ENCODE measurements at regions of chr11 and their contacts with region 1.

Region 1: GRCh38 chr11:6682936-6683861 is at the start of gene MRPL17:
- DNase-seq: peak; percentile 100
- ATAC-seq: peak; percentile 97
- H3K4me3 Mint-ChIP-seq: peak within 1 kb of the TSS; percentile 97
- H3K27ac Mint-ChIP-seq: peak within 1 kb of the TSS; percentile 97
- H3K4me1 Mint-ChIP-seq: peaks cover 20% of the 10 kb centered on the region
- H3K27me3 Mint-ChIP-seq: no peaks in the 10 kb centered on the region
- total RNA-seq, gene MRPL17: 69.4 to 81.0 TPM

Region 2: DNA sequence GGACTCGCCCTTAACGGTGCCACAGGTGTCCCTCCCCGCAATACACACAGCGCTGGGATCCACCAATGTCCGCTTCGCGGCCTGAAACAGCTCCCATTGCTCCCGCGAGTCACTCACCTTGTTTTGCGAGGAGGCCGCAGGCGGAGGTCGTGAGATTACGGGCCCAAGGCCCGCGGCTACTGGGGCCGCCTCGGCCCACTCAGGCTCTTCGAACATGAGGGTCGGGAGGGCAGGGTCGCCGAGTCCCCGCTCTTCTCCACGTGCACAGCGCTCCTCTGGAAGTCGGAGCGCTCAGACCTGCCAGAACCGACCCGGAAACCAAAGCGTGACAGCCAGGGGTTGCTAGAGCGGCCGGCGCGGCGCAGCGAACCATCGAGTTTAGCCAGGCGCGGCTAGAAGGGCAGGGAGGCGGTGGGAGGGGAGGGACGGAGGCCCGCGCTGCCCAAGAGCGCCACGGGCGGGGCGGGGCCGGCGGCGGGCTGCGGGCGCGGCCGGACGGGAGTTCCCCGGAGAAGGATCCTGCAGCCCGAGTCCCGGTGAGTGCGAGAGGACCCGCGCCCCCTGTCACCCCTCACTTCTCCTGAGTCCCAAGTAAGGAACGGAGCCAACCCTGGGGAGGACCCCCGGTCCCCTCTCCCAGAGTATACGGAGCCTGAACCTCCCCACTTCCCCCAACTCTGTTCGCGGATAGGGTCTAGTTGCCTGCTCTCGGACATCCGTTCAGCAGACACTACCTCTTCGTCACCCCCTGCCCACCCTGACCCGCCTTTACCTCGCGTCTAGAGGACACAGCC is 79.7 kb before region 1 on chr11 and contains the starts of genes ILK and RRP8:
- CTCF ChIA-PET with region 1: interaction called, 41 read pairs
- DNase-seq: peak; percentile 94
- ATAC-seq: peak; percentile 78
- H3K4me3 Mint-ChIP-seq: no peak within 1 kb of the TSS
- H3K27ac Mint-ChIP-seq: no peak within 1 kb of the TSS
- H3K4me1 Mint-ChIP-seq: peaks cover 30% of the 10 kb centered on the region
- H3K27me3 Mint-ChIP-seq: no peaks in the 10 kb centered on the region
- total RNA-seq, gene ILK: 151 to 161 TPM
- total RNA-seq, gene RRP8: 25.6 to 33.1 TPM

Region 3: DNA sequence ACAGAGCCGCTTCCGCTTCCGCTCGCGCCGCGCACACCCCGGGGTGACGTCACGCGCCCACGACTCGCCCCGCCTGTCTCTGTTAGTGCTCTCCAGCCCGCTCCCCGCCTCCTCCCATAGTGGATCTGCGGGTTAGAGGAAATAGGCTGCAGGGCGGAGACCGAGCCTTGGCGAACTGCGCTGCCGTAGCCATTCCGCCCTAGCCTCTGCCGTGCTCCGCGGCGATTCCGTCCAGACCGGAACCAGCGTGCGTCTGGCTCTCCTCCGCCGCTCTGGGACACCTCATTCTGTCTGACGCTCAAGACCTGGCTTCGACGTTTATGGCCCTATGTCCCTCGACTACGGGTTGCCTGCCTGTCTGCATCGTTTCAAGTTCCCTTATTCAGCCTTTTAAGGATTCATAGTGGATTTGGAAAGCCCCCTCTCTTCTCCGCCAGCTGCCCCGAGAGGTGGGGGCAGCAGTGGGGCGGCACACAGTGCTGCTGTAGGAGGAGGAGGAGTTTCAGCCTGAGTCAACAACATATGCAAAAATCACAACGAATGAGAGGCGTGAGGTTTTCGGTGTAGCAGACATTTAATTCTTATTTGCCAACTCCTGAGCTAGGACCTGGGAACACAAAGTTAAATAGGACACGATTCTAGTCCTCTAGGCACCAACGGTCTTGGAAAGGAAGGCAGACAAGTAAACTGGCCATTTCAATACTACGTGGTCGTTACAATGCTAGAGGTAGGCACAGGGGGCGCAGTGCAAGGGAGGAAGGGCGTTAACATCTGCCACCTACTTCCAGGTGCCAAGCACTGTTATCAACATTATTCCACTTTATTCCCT is 70.8 kb before region 1 on chr11 and contains the start of gene TAF10:
- CTCF ChIA-PET with region 1: interaction called, 24 read pairs
- DNase-seq: peak; percentile 97
- ATAC-seq: peak; percentile 92
- H3K4me3 Mint-ChIP-seq: no peak within 1 kb of the TSS
- H3K27ac Mint-ChIP-seq: peak within 1 kb of the TSS; percentile 91
- H3K4me1 Mint-ChIP-seq: peaks cover 41% of the 10 kb centered on the region
- H3K27me3 Mint-ChIP-seq: no peaks in the 10 kb centered on the region
- total RNA-seq, gene TAF10: 134 to 144 TPM

Region 4: DNA sequence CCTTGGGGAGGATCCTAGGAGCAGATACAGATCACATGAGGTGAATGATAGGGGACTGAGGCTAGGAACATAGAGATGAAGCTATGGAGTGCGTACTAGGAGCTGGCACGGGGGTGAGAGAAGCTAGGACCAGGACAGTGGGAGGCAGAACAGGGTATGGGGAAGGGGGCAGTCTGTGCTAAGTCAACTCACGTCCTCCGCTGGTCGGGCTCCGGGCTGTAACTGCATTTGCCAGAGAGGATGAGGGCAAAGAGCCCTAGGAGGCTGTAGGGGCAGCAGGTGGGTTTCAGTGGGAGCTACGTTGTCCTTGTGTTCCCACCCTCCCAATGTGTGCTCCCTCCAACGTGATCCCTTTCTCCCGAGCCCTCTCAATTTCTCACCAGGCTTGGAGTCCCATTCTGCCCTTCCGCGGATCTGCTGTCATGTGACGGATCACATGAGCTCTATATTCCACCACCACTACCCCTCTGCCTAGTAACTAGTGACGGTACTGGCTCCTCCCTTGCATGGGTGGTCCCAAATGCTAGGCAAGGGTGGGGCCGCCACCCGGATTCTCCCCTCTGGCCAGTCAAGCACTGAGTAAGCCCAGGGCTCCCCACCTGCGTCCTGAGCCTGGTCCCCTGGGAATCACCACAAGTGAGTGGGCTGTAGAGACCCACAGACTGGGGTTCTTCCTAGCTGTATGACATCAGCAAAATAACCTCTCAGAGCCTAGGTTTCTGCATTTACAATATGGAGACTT is 64.0 kb before region 1 on chr11 and contains the start of gene TPP1:
- CTCF ChIA-PET with region 1: interaction called, 31 read pairs
- DNase-seq: peak; percentile 96
- ATAC-seq: peak; percentile 96
- H3K4me3 Mint-ChIP-seq: no peak within 1 kb of the TSS
- H3K27ac Mint-ChIP-seq: no peak within 1 kb of the TSS
- H3K4me1 Mint-ChIP-seq: peaks cover 2% of the 10 kb centered on the region
- H3K27me3 Mint-ChIP-seq: no peaks in the 10 kb centered on the region
- total RNA-seq, gene TPP1: 76.8 to 79.3 TPM

Region 5: GRCh38 chr11:6667733-6668374 is 15.3 kb before region 1 on chr11:
- CTCF ChIA-PET with region 1: interaction called, 38 read pairs
- DNase-seq: peak; percentile 69
- ATAC-seq: peak; percentile 69
- H3K4me3 Mint-ChIP-seq: no peak overlapping the region
- H3K27ac Mint-ChIP-seq: peak overlapping the region; percentile 61
- H3K4me1 Mint-ChIP-seq: peaks cover 60% of the 10 kb centered on the region
- H3K27me3 Mint-ChIP-seq: no peaks in the 10 kb centered on the region

Region 6: DNA sequence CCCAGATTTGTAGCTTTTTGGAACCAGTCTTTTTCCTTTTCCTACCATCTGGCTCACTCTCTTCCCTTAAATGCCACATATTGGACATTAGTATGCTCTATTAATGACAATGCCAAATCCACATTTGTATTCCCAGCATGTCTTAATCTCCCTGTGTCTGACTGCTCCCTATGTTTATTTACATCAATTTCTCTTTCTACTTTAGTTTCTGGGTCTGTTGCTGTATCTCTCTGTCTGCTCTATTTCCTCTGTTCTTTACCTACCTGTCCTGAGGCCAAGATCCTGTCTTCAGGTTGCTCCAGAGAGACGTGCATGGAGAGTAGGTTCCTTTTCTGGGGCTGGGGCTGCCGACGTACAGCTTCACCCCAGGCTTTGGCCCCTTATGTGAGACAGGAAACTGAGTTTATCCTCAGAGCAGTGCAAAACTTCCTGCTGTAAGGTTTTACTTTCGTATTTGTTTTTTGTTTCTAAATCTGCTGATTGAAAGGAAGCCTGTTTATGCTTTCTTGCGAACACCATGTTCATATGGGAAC is 63.0 kb after region 1 on chr11:
- CTCF ChIA-PET with region 1: interaction called, 11 read pairs
- DNase-seq: peak; percentile 68
- ATAC-seq: peak; percentile 89
- H3K4me3 Mint-ChIP-seq: no peak overlapping the region
- H3K27ac Mint-ChIP-seq: no peak overlapping the region
- H3K4me1 Mint-ChIP-seq: peaks cover 30% of the 10 kb centered on the region
- H3K27me3 Mint-ChIP-seq: no peaks in the 10 kb centered on the region

Region 7: DNA sequence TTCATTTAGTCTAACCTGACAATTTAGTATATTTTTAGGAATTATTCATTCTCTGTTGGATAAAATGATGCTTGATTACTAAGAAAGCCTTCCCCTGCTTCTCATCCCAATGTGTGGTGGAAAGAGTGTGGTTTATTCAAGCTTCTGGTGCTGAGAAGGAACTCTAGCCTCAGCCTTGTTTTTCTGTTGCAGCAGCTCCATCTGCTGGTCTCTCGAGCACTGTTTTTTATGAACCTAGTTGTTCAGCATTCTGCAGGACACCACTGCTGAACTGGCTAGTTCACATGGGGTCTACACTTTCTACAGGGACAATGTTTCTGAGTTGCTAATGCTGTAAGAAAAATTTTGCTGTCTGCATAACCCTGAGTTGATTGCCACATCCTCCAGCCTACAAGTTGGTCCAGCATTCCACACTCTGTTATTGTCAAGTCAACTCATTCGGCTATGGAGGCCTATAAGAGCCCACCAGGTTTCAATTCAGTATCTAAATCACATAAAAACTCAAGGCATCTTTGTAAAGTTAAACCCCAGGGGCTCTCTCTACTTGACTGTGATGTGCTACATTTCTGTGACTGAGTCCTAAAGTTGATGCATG is 74.3 kb after region 1 on chr11:
- CTCF ChIA-PET with region 1: interaction called, 15 read pairs
- DNase-seq: peak; percentile 72
- ATAC-seq: peak; percentile 88
- H3K4me3 Mint-ChIP-seq: no peak overlapping the region
- H3K27ac Mint-ChIP-seq: no peak overlapping the region
- H3K4me1 Mint-ChIP-seq: peaks cover 1% of the 10 kb centered on the region
- H3K27me3 Mint-ChIP-seq: peaks cover 4% of the 10 kb centered on the region